ENCODE measurements at regions of chr16 and their contacts with region 1.

Region 1: DNA sequence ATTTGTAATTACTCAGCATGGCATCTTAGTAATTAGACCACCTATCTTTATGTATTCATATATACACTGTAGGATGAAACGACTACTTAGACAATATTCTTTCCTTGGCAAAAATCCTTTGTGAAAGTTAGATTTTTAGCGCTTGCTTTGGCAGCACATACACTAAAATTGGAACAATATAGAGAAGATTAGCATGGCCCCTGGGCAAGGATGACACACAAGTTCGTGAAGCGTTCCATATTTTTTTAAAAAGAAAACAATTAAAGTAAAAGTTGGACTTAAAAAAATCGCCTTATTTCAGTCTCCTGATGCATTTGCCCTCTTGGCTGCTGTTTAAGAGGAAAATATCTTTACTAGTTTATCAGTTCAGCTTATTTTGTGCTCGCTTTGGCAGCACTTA is 10.5 kb downstream of the IGSF6 start:
- DNase-seq: no peak
- H3K4me3 ChIP-seq: no peak overlapping the region
- H3K27ac ChIP-seq: no peak overlapping the region
- H3K4me1 ChIP-seq: peaks cover 5% of the 10 kb centered on the region
- H3K27me3 ChIP-seq: no peaks in the 10 kb centered on the region
- CTCF ChIP-seq: no peak

Region 2: DNA sequence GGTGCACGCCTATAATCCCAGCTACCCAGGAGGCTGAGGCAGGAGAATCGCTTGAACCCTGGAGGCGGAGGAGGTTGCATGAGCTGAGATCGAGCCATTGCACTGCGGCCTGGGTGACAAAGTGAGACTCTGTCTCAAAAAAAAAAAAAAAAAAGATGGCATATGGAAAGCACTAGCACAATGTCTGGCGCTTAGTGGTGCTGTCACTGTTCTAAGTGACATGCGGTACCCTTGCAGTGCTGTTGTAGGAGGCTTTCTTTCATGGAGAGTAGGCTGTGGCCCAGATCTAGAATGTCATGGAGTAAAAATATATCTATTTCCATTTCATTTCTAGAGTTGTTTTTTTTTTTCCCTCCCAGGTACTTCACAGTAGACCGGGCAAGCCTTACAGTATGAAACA is 57.1 kb before region 1 on chr16:
- intact Hi-C with region 1: loop called (anchors 2 kb)
- DNase-seq: no peak
- H3K4me3 ChIP-seq: no peak overlapping the region
- H3K27ac ChIP-seq: no peak overlapping the region
- H3K4me1 ChIP-seq: no peaks in the 10 kb centered on the region
- H3K27me3 ChIP-seq: no peaks in the 10 kb centered on the region
- CTCF ChIP-seq: no peak

Measured in colonic mucosa (tissue), 4 donors.